CD8-positive, alpha-beta T cell (primary cell): ENCODE measurements at regions of chr12 and their contacts with region 1.

Region 1: GRCh38 chr12:75390899-75391538 is at the start of gene GLIPR1L2:
- DNase-seq: peak; percentile 77 to 96 (median 85)
- ATAC-seq: peak; percentile 88
- H3K4me3 ChIP-seq: peak within 1 kb of the TSS; percentile 70 to 72
- H3K4me3 Mint-ChIP-seq: peak within 1 kb of the TSS; percentile 91
- H3K27ac ChIP-seq: peak within 1 kb of the TSS; percentile 70 to 90
- H3K27ac Mint-ChIP-seq: peak within 1 kb of the TSS; percentile 95
- H3K4me1 ChIP-seq: peaks cover 26% of the 10 kb centered on the region
- H3K4me1 Mint-ChIP-seq: peaks cover 46% of the 10 kb centered on the region
- H3K27me3 ChIP-seq: no peaks in the 10 kb centered on the region
- H3K27me3 Mint-ChIP-seq: no peaks in the 10 kb centered on the region
- CTCF ChIP-seq: peak; percentile 53
- total RNA-seq, gene GLIPR1L2: not detected

Region 2: DNA sequence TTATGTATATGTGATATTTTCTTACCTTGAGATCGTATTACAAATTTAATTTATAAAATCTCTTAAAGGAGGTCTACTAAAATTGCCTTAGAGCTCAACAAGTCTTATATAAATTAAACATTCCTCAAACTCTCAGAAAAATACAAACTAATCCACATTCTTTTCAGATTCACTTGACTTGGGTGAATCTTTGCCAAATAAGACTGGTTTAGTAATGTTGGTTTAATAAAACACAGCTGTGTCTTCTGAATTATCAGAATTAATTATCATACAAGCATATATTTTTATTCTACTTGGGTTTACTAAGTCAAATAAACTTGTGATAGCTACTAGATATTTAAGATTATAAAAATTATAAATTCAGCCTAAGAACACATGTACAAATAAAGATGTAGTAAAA is 13.2 kb after region 1 on chr12:
- CTCF ChIA-PET with region 1: no interaction called
- POLR2A ChIA-PET with region 1: interaction called, 4 read pairs
- intact Hi-C with region 1: loop called in 1 of 2 experiments (anchors 2 kb)
- DNase-seq: no peak
- ATAC-seq: no peak
- H3K4me3 ChIP-seq: no peak overlapping the region
- H3K4me3 Mint-ChIP-seq: no peak overlapping the region
- H3K27ac ChIP-seq: no peak overlapping the region
- H3K27ac Mint-ChIP-seq: no peak overlapping the region
- H3K4me1 ChIP-seq: no peaks in the 10 kb centered on the region
- H3K4me1 Mint-ChIP-seq: no peaks in the 10 kb centered on the region
- H3K27me3 ChIP-seq: no peaks in the 10 kb centered on the region
- H3K27me3 Mint-ChIP-seq: no peaks in the 10 kb centered on the region
- CTCF ChIP-seq: no peak

Region 3: GRCh38 chr12:75505706-75506312 is 114.8 kb after region 1 on chr12:
- CTCF ChIA-PET with region 1: interaction called, 8 read pairs
- POLR2A ChIA-PET with region 1: interaction called, 10 read pairs
- intact Hi-C with region 1: loop called (anchors 1 to 5 kb)
- DNase-seq: peak in 2 of 9 experiments; percentile 41 to 55
- ATAC-seq: peak; percentile 63
- H3K4me3 ChIP-seq: no peak overlapping the region
- H3K4me3 Mint-ChIP-seq: no peak overlapping the region
- H3K27ac ChIP-seq: no peak overlapping the region
- H3K27ac Mint-ChIP-seq: no peak overlapping the region
- H3K4me1 ChIP-seq: peaks cover 13% of the 10 kb centered on the region
- H3K4me1 Mint-ChIP-seq: peaks cover 26% of the 10 kb centered on the region
- H3K27me3 ChIP-seq: no peaks in the 10 kb centered on the region
- H3K27me3 Mint-ChIP-seq: no peaks in the 10 kb centered on the region
- CTCF ChIP-seq: peak; percentile 84

Region 4: GRCh38 chr12:75705749-75706711 is 315.0 kb after region 1 on chr12:
- CTCF ChIA-PET with region 1: no interaction called
- POLR2A ChIA-PET with region 1: no interaction called
- intact Hi-C with region 1: no loop called
- DNase-seq: no peak
- ATAC-seq: no peak
- H3K4me3 ChIP-seq: no peak overlapping the region
- H3K4me3 Mint-ChIP-seq: no peak overlapping the region
- H3K27ac ChIP-seq: no peak overlapping the region
- H3K27ac Mint-ChIP-seq: no peak overlapping the region
- H3K4me1 ChIP-seq: no peaks in the 10 kb centered on the region
- H3K4me1 Mint-ChIP-seq: peaks cover 6% of the 10 kb centered on the region
- H3K27me3 ChIP-seq: no peaks in the 10 kb centered on the region
- H3K27me3 Mint-ChIP-seq: peaks cover 2% of the 10 kb centered on the region
- CTCF ChIP-seq: no peak

Region 5: GRCh38 chr12:76348079-76348901 is 957.3 kb after region 1 on chr12 and contains the start of gene BBS10:
- CTCF ChIA-PET with region 1: no interaction called
- POLR2A ChIA-PET with region 1: no interaction called
- intact Hi-C with region 1: loop called in 1 of 2 experiments (anchors 2 kb)
- DNase-seq: peak; percentile 71 to 92 (median 88)
- ATAC-seq: peak; percentile 96
- H3K4me3 ChIP-seq: peak within 1 kb of the TSS; percentile 76 to 78
- H3K4me3 Mint-ChIP-seq: peak within 1 kb of the TSS; percentile 96
- H3K27ac ChIP-seq: peak within 1 kb of the TSS; percentile 56 to 81
- H3K27ac Mint-ChIP-seq: peak within 1 kb of the TSS; percentile 93
- H3K4me1 ChIP-seq: peaks cover 14% of the 10 kb centered on the region
- H3K4me1 Mint-ChIP-seq: peaks cover 29% of the 10 kb centered on the region
- H3K27me3 ChIP-seq: no peaks in the 10 kb centered on the region
- H3K27me3 Mint-ChIP-seq: no peaks in the 10 kb centered on the region
- CTCF ChIP-seq: peak; percentile 11
- total RNA-seq, gene BBS10: 1.4 to 1.5 TPM